Left ventricle myocardium superior (tissue), 1 donor: ENCODE measurements at regions of chr2 and their contacts with region 1.

Region 1: GRCh38 chr2:102005989-102006885 is 14.5 kb downstream of the IL1R2 start:
- DNase-seq: no peak
- ATAC-seq: peak; percentile 82

Region 2: GRCh38 chr2:101272045-101272784 is 734.0 kb before region 1 on chr2:
- intact Hi-C with region 1: no loop called
- DNase-seq: no peak
- ATAC-seq: no peak

Region 3: GRCh38 chr2:102442967-102443828 is 437.0 kb after region 1 on chr2:
- intact Hi-C with region 1: loop called (anchors 10 kb)
- DNase-seq: no peak
- ATAC-seq: peak; percentile 26